ENCODE measurements at regions of chr2 and their contacts with region 1.

Region 1: DNA sequence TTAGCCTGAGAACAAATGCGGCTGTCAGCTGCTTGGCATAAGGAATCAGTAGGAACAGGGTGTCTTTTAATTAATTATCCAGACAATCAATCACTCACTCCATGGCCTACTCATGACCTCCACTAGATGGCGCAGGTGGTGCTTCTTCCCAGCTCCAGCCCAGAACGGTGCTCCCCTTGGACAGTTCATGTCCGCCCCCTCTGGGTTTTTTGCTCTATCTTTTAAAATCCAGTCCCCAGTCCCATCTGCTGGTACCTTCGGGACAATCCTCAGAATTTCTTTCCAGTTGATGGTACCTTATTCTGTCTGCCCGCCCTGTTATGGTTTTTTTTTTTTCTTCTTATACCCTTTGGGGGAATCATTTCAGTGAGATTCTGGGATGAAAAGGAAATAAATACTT is 99.8 kb downstream of the CACNB4 start:
- DNase-seq: peak; percentile 75
- H3K4me3 Mint-ChIP-seq: no peak overlapping the region
- H3K27ac Mint-ChIP-seq: no peak overlapping the region
- H3K4me1 Mint-ChIP-seq: peaks cover 1% of the 10 kb centered on the region
- H3K27me3 Mint-ChIP-seq: peaks cover 11% of the 10 kb centered on the region
- CTCF ChIP-seq: peak; percentile 74

Region 2: DNA sequence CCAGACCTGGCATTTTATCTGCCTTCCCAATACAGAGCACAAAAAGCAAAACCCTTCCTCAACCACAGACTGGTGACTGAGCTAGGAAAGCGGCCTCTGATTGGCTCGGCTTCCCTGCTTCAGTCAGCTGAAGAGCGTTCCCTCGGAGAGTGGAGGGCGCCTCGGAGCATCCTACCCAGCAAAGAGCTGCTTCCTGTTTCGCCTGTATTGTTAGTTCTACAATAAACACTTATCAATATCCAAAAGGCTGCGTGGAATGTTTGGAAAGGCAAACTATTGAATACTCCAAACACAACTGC is 25.2 kb before region 1 on chr2:
- CTCF ChIA-PET with region 1: interaction called, 12 read pairs
- POLR2A ChIA-PET with region 1: no interaction called
- intact Hi-C with region 1: no loop called
- DNase-seq: no peak
- H3K4me3 Mint-ChIP-seq: no peak overlapping the region
- H3K27ac Mint-ChIP-seq: no peak overlapping the region
- H3K4me1 Mint-ChIP-seq: peaks cover 11% of the 10 kb centered on the region
- H3K27me3 Mint-ChIP-seq: no peaks in the 10 kb centered on the region
- CTCF ChIP-seq: no peak

Region 3: GRCh38 chr2:152012697-152013096 is 13.6 kb after region 1 on chr2:
- CTCF ChIA-PET with region 1: interaction called, 16 read pairs
- POLR2A ChIA-PET with region 1: no interaction called
- intact Hi-C with region 1: no loop called
- DNase-seq: no peak
- H3K4me3 Mint-ChIP-seq: no peak overlapping the region
- H3K27ac Mint-ChIP-seq: no peak overlapping the region
- H3K4me1 Mint-ChIP-seq: no peaks in the 10 kb centered on the region
- H3K27me3 Mint-ChIP-seq: no peaks in the 10 kb centered on the region
- CTCF ChIP-seq: no peak

Measured in MCF 10A (cell line).